ENCODE measurements at regions of chr5 and their contacts with region 1.

Region 1: DNA sequence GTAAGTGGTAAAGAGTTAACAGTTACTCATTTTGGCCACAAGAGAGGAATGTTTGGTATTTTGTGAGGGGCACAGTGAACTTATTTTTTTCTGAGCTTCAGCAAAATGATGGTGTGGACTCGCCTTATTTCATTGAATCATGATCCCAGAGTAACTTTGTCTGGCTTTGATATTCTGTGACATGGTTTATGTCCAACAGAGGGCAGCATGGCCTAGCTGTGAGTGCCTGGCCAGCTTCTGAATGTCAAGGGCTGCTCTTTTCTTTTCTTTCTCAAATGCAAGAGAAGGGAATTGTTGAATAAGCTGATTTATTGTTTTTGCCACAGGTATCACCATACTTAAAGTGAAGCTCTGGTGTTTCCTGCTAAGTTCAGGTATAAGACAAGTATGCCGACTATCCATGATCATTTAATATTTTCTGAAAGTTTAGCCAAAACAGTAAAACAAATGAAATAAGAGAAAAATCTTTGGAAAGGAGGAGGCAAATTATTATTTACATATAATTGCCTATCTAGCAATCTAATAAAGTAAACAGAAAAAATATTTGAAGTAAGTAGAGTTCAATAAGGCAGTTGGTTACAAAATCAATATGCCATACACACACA is 31.7 kb downstream of the MRPL22 start:
- DNase-seq: peak; percentile 66
- H3K4me3 Mint-ChIP-seq: no peak overlapping the region
- H3K27ac Mint-ChIP-seq: no peak overlapping the region
- H3K4me1 Mint-ChIP-seq: no peaks in the 10 kb centered on the region
- H3K27me3 Mint-ChIP-seq: no peaks in the 10 kb centered on the region
- CTCF ChIP-seq: peak; percentile 68

Region 2: GRCh38 chr5:154962494-154962893 is 10.1 kb before region 1 on chr5:
- CTCF ChIA-PET with region 1: interaction called, 30 read pairs
- POLR2A ChIA-PET with region 1: no interaction called
- intact Hi-C with region 1: no loop called
- DNase-seq: peak; percentile 32
- H3K4me3 Mint-ChIP-seq: no peak overlapping the region
- H3K27ac Mint-ChIP-seq: no peak overlapping the region
- H3K4me1 Mint-ChIP-seq: no peaks in the 10 kb centered on the region
- H3K27me3 Mint-ChIP-seq: no peaks in the 10 kb centered on the region
- CTCF ChIP-seq: no peak

Region 3: GRCh38 chr5:154995679-154996078 is 23.1 kb after region 1 on chr5:
- CTCF ChIA-PET with region 1: interaction called, 13 read pairs
- POLR2A ChIA-PET with region 1: no interaction called
- intact Hi-C with region 1: no loop called
- DNase-seq: no peak
- H3K4me3 Mint-ChIP-seq: no peak overlapping the region
- H3K27ac Mint-ChIP-seq: no peak overlapping the region
- H3K4me1 Mint-ChIP-seq: peaks cover 11% of the 10 kb centered on the region
- H3K27me3 Mint-ChIP-seq: no peaks in the 10 kb centered on the region
- CTCF ChIP-seq: no peak

Region 4: GRCh38 chr5:155027993-155028629 is 55.5 kb after region 1 on chr5:
- CTCF ChIA-PET with region 1: interaction called, 59 read pairs
- POLR2A ChIA-PET with region 1: interaction called, 4 read pairs
- intact Hi-C with region 1: loop called (anchors 1 kb)
- DNase-seq: peak; percentile 58
- H3K4me3 Mint-ChIP-seq: no peak overlapping the region
- H3K27ac Mint-ChIP-seq: no peak overlapping the region
- H3K4me1 Mint-ChIP-seq: no peaks in the 10 kb centered on the region
- H3K27me3 Mint-ChIP-seq: no peaks in the 10 kb centered on the region
- CTCF ChIP-seq: peak; percentile 67

Region 5: DNA sequence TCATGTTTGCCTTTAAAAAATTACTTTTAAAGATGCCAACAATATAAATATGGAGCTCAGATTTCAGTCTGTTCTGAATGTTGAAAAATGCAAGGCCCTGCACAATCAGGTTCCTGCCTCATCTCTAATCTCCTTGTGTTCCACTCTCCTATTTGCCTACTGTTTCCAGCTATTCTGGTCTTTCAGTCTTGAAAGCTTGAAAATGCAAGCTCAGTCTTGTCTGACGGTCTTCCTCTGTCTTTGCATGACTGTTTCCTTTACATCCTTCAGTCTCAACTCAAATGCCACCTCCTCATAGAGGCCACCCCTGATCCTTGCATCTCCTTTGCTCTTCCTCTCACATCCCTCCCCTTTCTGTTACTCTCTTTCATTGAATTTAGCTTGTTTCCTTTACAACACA is 395.9 kb after region 1 on chr5:
- CTCF ChIA-PET with region 1: no interaction called
- POLR2A ChIA-PET with region 1: no interaction called
- intact Hi-C with region 1: no loop called
- DNase-seq: no peak
- H3K4me3 Mint-ChIP-seq: no peak overlapping the region
- H3K27ac Mint-ChIP-seq: no peak overlapping the region
- H3K4me1 Mint-ChIP-seq: no peaks in the 10 kb centered on the region
- H3K27me3 Mint-ChIP-seq: no peaks in the 10 kb centered on the region
- CTCF ChIP-seq: no peak

Region 6: DNA sequence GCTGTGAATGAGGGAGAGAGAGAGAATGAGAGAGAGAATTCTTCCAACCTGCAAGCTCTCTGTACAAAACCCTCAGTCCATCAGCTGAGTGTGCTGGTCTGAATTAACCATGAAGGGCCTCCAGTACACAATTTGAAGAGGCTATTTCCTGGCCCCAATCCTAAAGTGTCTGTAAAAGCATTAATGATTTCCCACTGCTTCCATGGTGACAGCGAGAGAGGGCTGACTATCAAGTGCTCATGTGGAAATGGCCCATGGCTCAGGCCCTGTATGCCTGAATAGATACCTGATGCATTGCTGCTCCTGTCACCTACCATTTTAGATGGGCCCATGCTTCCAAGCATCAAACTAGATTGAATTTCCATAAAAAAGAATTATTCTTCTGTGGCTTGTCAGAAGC is 633.3 kb after region 1 on chr5:
- CTCF ChIA-PET with region 1: no interaction called
- POLR2A ChIA-PET with region 1: no interaction called
- intact Hi-C with region 1: no loop called
- DNase-seq: no peak
- H3K4me3 Mint-ChIP-seq: no peak overlapping the region
- H3K27ac Mint-ChIP-seq: no peak overlapping the region
- H3K4me1 Mint-ChIP-seq: no peaks in the 10 kb centered on the region
- H3K27me3 Mint-ChIP-seq: no peaks in the 10 kb centered on the region
- CTCF ChIP-seq: no peak

Region 7: GRCh38 chr5:155700333-155700732 is 727.8 kb after region 1 on chr5:
- CTCF ChIA-PET with region 1: interaction called, 5 read pairs
- POLR2A ChIA-PET with region 1: no interaction called
- intact Hi-C with region 1: loop called (anchors 5 kb)
- DNase-seq: peak; percentile 4
- H3K4me3 Mint-ChIP-seq: no peak overlapping the region
- H3K27ac Mint-ChIP-seq: no peak overlapping the region
- H3K4me1 Mint-ChIP-seq: no peaks in the 10 kb centered on the region
- H3K27me3 Mint-ChIP-seq: no peaks in the 10 kb centered on the region
- CTCF ChIP-seq: peak; percentile 56

Measured in MCF 10A (cell line).